ENCODE measurements at regions of chr5 and their contacts with region 1.

Region 1: DNA sequence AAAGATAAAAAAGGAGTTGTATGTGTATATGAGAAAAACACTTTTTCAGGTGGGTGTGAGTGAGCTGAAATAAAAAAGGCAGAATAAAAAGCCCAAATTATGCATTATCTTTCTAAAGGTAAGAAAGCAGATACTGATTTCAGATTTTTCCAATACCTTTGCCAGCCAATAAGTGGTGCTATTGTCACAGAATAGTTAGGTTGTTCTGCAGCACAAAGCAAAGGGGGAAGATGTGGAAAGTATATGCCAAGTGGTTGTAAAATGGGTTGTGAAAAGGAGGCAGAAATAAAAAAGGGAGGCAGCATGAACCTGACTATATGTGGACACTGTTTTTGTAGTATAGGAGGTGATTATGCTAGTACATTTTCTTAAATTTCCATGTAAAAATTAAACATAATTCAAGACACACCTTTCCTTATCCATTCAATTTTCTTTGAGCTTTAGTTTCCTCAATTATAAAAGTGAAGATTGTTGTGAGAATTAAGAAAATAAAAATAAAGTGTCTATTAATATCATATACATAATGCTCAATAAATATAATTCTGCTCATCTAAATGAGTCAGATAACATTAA is 106.7 kb downstream of the SMIM15 start:
- DNase-seq: no peak
- ATAC-seq: peak in 1 of 4 donors; percentile 60
- H3K4me3 ChIP-seq: no peak overlapping the region
- H3K27ac ChIP-seq: no peak overlapping the region
- H3K4me1 ChIP-seq: no peaks in the 10 kb centered on the region
- H3K27me3 ChIP-seq: no peaks in the 10 kb centered on the region
- CTCF ChIP-seq: peak; percentile 57

Region 2: GRCh38 chr5:62143268-62144229 is 1088.0 kb after region 1 on chr5:
- intact Hi-C with region 1: loop called in 1 of 2 experiments (anchors 10 kb)
- DNase-seq: no peak
- ATAC-seq: no peak
- H3K4me3 ChIP-seq: no peak overlapping the region
- H3K27ac ChIP-seq: no peak overlapping the region
- H3K4me1 ChIP-seq: no peaks in the 10 kb centered on the region
- H3K27me3 ChIP-seq: peaks cover 0 to 3% (median 0%) of the 10 kb centered on the region in 3 donors
- CTCF ChIP-seq: peak; percentile 31

Measured in psoas muscle (tissue), 8 donors.